Activated T-helper 1 cell treated with anti-CD3 and anti-CD28 coated beads, Interleukin-12 subunit alpha, Interleukin-12 subunit beta, Interleukin-2, Interleukin-4 antibody, amounts not matched to agents 30 ng/mL and 10 ng/mL and 1 ng/mL, durations not matched to agents 14 hours and 24 hours and 36 hours (primary cell): ENCODE measurements at regions of chrX and their contacts with region 1.

Region 1: GRCh38 chrX:101051549-101052302 is at the start of gene TRMT2B:
- DNase-seq: peak; percentile 72
- H3K4me3 Mint-ChIP-seq: peak within 1 kb of the TSS; percentile 88
- H3K27ac Mint-ChIP-seq: peak within 1 kb of the TSS; percentile 93
- H3K4me1 Mint-ChIP-seq: peaks cover 17% of the 10 kb centered on the region
- H3K27me3 Mint-ChIP-seq: no peaks in the 10 kb centered on the region
- total RNA-seq, gene TRMT2B: 17.2 and 19.3 TPM in 2 replicates

Region 2: DNA sequence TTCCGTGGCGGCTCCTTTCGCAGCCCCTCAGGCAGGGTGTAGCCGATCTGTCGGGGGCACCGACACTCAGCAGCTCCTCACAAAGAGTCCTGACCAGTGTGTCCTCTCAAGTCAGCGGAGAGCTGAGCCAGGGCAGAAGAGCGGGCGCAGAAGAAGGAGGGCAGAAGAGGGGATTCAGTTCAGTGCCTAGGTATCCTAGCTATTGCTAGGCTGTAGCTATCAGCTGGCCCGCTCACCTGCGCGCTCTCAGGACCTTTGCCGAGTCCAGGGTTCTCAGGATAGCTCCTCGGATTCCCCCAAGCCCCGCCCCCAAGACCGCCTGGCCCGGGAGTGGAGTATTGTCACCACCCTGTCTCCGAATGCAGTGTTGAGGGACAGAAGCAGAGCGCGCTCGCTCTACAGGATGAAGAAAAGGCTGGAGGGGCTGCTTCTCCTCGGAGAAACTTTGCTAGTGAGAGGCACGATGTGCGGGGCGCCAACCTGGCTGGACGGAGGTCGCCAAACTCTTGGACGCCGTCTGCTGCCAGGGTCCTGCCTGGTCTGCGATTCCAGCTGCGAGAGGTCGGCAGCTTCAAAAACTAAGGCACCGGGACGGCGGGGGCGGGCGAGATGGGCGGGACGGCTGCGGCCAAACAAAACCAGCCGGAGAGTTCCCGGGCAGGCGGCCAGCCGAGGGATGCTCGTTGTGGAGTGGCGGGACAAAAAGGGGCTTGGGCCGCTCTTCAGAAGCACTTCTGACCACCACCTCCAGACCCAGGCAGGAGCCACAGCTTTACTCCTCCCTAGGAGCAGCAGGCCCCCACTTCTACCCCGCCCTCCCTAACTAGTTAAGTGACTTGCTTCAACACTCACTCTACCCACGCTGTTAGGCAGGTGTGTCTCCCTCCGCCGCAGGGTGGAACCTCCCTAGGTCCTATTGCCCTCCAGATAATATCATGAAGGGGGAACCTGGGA is 122.8 kb before region 1 on chrX and contains the start of gene XKRX:
- intact Hi-C with region 1: loop called (anchors 2 kb)
- DNase-seq: peak; percentile 5
- H3K4me3 Mint-ChIP-seq: peak within 1 kb of the TSS; percentile 85
- H3K27ac Mint-ChIP-seq: peak within 1 kb of the TSS; percentile 34
- H3K4me1 Mint-ChIP-seq: peaks cover 22% of the 10 kb centered on the region
- H3K27me3 Mint-ChIP-seq: no peaks in the 10 kb centered on the region
- total RNA-seq, gene XKRX: 0.39 and 0.51 TPM in 2 replicates

Region 3: GRCh38 chrX:100939333-100939732 is 112.4 kb before region 1 on chrX:
- intact Hi-C with region 1: no loop called
- DNase-seq: no peak
- H3K4me3 Mint-ChIP-seq: no peak overlapping the region
- H3K27ac Mint-ChIP-seq: no peak overlapping the region
- H3K4me1 Mint-ChIP-seq: no peaks in the 10 kb centered on the region
- H3K27me3 Mint-ChIP-seq: peaks cover 2% of the 10 kb centered on the region

Region 4: DNA sequence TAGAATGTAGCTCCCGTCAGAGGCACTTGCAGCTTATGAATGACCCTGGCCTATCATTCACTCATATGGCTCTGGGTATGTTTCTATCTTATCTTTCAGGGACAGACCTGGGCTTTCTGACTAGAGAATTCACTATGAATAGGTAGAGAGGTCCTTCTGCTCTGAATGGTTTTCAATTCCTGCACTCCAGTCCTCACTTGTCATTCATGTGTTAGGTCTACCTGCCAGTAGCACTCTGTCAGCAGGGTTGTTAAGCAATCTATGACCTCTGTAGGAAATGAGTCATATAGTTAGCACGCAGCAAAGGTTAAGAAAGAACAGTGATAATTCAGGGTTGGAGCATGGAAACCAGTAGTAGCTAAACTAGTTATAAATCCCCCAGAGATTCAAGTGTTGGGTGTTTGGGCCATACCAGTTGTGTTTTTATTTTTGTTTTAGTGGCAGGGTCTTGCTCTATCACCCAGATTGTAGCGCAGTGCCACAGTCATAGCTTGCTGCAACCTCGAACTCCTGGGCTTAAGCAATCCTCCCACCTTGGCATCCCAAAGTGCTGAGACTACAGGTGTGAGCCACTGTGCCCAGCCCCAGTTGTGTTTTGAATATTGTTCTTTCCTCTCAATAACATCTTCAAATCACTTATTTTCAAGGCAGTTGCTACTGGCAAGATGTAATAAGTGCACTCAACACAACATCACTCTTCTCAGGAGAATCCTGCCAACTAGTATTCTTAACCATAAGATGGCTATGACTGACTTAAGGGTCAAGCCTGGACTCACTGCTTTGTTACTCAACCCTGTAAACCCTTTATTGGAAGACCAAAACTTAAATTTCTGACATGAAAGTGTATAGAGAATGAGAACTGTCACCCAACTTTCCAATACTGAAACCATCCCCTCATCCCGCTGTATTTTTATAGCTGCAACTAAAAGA is 57.1 kb before region 1 on chrX:
- intact Hi-C with region 1: loop called (anchors 1 kb)
- DNase-seq: no peak
- H3K4me3 Mint-ChIP-seq: peak overlapping the region; percentile 30
- H3K27ac Mint-ChIP-seq: peak overlapping the region; percentile 82
- H3K4me1 Mint-ChIP-seq: peaks cover 30% of the 10 kb centered on the region
- H3K27me3 Mint-ChIP-seq: no peaks in the 10 kb centered on the region

Region 5: GRCh38 chrX:101348452-101349192 is 296.9 kb after region 1 on chrX and contains the start of gene TIMM8A:
- intact Hi-C with region 1: loop called (anchors 1 kb)
- DNase-seq: peak; percentile 72
- H3K4me3 Mint-ChIP-seq: peak within 1 kb of the TSS; percentile 90
- H3K27ac Mint-ChIP-seq: peak within 1 kb of the TSS; percentile 80
- H3K4me1 Mint-ChIP-seq: peaks cover 5% of the 10 kb centered on the region
- H3K27me3 Mint-ChIP-seq: no peaks in the 10 kb centered on the region
- total RNA-seq, gene TIMM8A: 30.9 and 36.5 TPM in 2 replicates

Region 6: DNA sequence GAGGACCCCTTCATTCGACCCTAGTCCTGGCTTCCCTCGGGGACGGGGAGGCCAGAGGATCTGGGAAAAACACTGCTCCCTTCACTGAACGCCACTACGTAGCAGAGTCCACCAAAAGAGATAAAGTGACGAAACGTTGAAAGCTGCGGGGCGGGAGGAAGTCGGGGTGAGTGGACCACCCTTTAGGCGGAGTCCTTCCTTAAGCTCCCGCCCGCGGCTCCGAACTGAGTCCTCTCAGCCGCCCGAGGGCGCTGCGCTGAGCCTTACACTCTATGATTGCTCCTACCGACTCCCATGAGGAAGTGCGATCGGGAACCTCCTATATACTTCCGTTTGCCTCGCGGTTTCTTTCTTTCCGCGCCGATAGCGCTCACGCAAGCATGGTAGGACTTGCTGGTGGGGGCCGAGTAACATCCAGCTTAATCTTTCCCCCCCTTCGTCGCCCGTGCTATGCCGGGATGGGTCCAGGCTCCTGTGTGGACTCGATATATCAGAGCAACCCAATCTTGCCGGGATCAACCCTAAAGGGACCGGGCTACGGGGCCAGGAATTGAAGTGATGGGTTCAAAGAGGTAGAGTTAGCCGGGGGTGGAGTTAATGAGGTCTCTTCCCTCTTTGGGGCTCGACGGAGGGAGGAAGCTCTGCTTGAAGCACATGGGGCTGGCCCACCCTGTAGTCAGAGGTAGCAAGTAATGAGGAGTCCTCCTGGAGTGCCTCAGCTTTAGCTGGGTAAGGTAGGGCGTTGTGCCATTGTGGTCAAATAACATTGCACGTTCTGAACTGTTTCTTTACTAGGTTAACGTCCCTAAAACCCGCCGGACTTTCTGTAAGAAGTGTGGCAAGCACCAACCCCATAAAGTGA is 339.2 kb after region 1 on chrX and contains the start of gene RPL36A:
- intact Hi-C with region 1: loop called (anchors 2 kb)
- DNase-seq: peak; percentile 75
- H3K4me3 Mint-ChIP-seq: peak within 1 kb of the TSS; percentile 98
- H3K27ac Mint-ChIP-seq: peak within 1 kb of the TSS; percentile 94
- H3K4me1 Mint-ChIP-seq: peaks cover 7% of the 10 kb centered on the region
- H3K27me3 Mint-ChIP-seq: peaks cover 2% of the 10 kb centered on the region
- total RNA-seq, gene RPL36A: 226 and 269 TPM in 2 replicates